Right cardiac atrium (tissue), 5 donors: ENCODE measurements at regions of chr5 and their contacts with region 1.

Region 1: DNA sequence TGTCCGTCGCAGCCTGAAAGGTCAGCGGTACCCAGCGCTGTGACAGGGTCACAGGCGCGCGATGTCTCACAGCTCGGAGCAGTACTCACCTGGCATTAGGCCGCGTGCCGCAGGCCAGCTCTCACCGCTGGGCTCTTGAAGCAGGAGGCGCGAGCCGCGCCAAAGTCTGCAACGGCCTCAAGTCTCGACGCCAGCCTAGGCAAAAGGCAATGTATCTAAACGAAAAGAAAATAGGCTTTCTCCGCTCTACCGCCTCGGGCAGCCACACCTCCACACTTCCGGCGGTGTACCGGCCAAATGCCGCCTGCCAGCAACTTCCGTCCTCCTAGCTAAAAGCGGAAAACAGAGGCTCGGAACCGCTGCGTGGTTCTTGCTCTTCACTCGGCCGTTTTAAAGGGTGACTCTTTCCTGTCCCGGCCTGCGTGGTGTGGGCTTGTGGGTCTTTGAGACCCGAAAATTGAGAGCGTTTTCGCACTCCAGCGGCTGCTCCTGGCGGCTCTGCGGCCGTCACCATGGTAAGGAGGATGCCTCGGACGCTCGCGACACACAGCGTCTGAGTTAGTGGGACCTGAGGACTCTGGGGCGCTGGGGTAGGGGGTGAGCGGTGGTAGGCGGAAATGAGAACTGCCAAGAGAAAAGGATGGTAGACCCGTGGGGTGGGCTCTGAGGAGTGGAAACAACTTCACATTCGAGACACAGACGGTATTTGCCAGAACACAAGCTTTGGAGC is at the starts of genes GFM2 and NSA2:
- DNase-seq: peak; percentile 92 to 97 (median 96)
- ATAC-seq: peak; percentile 99
- H3K4me3 ChIP-seq: peak within 1 kb of the TSS; percentile 97
- H3K27ac ChIP-seq: peak within 1 kb of the TSS; percentile 86
- H3K4me1 ChIP-seq: peaks cover 5% of the 10 kb centered on the region
- H3K27me3 ChIP-seq: no peaks in the 10 kb centered on the region
- total RNA-seq, gene GFM2: 21.6 to 41.1 (median 33.7) TPM
- total RNA-seq, gene NSA2: 46.8 to 81.8 (median 61.1) TPM

Region 2: DNA sequence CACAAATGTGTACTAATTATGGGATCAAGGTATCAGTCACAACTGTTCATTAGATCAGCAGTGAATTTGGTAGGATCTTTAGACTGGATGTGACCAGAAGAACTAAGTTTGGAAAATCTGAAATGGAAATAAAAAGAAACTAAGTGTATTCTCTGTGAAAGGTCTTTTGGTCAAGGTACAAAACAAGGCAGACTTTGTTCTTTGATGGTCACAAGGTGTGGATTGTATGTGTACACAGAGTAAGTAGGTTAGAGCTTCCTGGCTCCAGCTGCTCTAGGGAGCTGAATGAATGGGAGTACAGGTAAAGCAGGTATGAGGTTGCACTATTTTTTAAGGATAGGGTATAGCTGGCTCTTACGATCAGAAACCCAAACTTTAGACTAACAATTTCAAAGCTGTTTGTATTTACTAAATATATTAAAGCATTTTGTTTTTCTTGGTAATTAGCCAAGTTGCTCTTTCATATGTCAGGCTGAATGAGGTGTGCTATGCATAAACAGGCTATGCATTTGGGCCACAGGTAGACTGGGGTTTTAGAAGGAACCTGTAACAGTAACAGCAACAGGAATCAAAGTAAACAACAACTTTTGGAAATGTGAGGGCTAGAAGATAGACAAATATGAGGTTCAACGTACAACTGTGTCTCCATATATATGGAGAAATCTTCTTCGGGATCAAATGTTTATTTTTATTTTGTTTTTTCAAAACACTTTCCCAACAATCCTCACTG is 66.7 kb after region 1 on chr5:
- intact Hi-C with region 1: no loop called
- DNase-seq: no peak
- ATAC-seq: no peak
- H3K4me3 ChIP-seq: no peak overlapping the region
- H3K27ac ChIP-seq: no peak overlapping the region
- H3K4me1 ChIP-seq: no peaks in the 10 kb centered on the region
- H3K27me3 ChIP-seq: no peaks in the 10 kb centered on the region

Region 3: DNA sequence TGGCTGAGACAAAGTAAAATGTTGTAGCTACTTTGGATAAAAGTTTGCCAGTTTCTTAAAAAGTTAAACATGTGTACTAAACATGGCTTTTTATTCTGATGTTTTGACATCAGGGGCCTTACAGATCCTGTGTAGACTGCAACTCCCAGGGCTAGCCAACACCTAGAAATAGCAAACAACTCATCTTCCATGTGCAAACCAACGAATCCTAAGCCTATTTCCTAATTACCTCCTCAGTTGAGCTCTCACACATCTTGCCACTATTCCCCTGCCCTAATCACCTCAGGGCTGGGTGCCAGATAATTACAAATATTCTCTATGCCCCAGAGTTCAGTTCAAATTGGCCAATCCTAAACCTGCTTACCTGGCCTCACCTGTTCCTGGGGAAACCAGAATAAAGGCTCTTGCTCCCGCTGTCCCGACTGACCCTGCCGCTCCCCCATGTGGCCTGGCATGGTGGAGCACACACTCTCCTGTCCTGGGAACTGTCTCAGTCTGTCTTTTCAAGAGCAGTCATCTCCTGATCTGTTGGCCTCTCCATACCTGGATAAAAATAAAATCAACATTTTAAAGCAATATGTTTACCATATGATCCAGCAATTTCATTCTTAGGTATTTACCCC is 136.3 kb after region 1 on chr5:
- intact Hi-C with region 1: loop called in 1 of 4 experiments (anchors 5 kb)
- DNase-seq: no peak
- ATAC-seq: peak; percentile 51 to 55
- H3K4me3 ChIP-seq: no peak overlapping the region
- H3K27ac ChIP-seq: no peak overlapping the region
- H3K4me1 ChIP-seq: no peaks in the 10 kb centered on the region
- H3K27me3 ChIP-seq: no peaks in the 10 kb centered on the region

Region 4: DNA sequence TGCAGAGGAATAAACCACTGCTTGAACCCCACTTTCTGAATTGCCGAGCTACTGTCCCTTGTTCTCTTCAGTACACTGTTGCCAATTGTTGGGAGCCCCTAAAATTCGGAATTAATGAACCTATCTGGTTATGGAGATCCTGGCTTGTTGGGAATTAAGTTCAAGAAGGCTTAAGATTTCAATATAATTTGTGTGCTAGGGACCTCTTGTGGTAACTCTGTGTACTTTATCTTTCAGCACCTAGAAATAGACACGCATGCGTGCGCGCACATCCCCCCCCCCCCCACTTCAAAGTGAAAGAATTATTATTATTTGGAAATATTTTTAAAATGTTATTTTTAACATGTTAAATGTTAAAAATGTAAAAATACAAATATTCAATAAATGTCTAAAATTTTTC is 152.5 kb after region 1 on chr5:
- intact Hi-C with region 1: loop called in 1 of 4 experiments (anchors 10 kb)
- DNase-seq: no peak
- ATAC-seq: peak in 1 of 2 donors; percentile 57
- H3K4me3 ChIP-seq: no peak overlapping the region
- H3K27ac ChIP-seq: no peak overlapping the region
- H3K4me1 ChIP-seq: no peaks in the 10 kb centered on the region
- H3K27me3 ChIP-seq: no peaks in the 10 kb centered on the region